ENCODE measurements at regions of chr13 and their contacts with region 1.

Region 1: GRCh38 chr13:30984620-30985019 is 52.2 kb downstream of the TEX26 start:
- DNase-seq: no peak
- ATAC-seq: peak; percentile 61
- H3K4me3 ChIP-seq: no peak overlapping the region
- H3K27ac ChIP-seq: no peak overlapping the region
- H3K4me1 ChIP-seq: peaks cover 5% of the 10 kb centered on the region; the same call in 1 of the 2 replicates
- H3K27me3 ChIP-seq: no peaks in the 10 kb centered on the region
- CTCF ChIP-seq: no peak
- EP300 ChIP-seq: no peak
- POLR2A ChIP-seq: no peak
- RAD21 ChIP-seq: no peak

Region 2: DNA sequence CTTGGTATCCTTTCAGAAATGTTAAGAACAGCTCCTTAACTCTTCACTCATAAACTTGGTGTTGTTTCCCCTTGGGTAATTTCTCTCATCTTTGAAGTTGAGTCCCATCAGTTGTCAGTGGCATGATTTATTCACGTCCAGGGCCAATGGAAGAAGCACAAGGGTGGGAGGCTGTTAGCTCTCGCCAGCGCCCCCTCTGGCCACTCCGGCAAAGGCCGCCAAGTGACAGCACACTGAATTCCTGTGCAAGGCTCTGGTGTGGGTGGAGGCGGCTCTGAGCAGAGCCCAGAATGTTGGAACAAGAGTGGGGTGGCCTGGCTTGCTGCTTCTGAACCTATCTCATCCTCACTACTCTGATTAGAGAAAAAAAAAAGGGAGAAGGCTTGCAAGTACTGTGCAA is 91.7 kb before region 1 on chr13:
- CTCF ChIA-PET with region 1: no interaction called
- POLR2A ChIA-PET with region 1: no interaction called
- RAD21 ChIA-PET with region 1: no interaction called
- SMC1A ChIA-PET with region 1: no interaction called
- in situ Hi-C with region 1: no loop called
- intact Hi-C with region 1: loop called (anchors 5 kb)
- DNase-seq: no peak
- ATAC-seq: peak; percentile 37; the same call in 1 of the 3 replicates
- H3K4me3 ChIP-seq: no peak overlapping the region
- H3K27ac ChIP-seq: no peak overlapping the region
- H3K4me1 ChIP-seq: no peaks in the 10 kb centered on the region
- H3K27me3 ChIP-seq: no peaks in the 10 kb centered on the region; a peak in 1 of 4 replicates
- CTCF ChIP-seq: peak; percentile 7 to 44 (median 32); a peak in 3 of 6 replicates
- EP300 ChIP-seq: no peak
- POLR2A ChIP-seq: no peak
- RAD21 ChIP-seq: no peak